Dorsolateral prefrontal cortex (tissue), 120 donors: ENCODE measurements at regions of chr5 and their contacts with region 1.

Region 1: GRCh38 chr5:146475190-146475801 is 28.2 kb downstream of the TCERG1 start:
- DNase-seq: no peak
- H3K4me3 ChIP-seq: no peak overlapping the region
- H3K27ac ChIP-seq: no peak overlapping the region
- H3K27me3 ChIP-seq: no peaks in the 10 kb centered on the region
- CTCF ChIP-seq: peak in 8 of 56 donors; percentile 8 to 34 (median 16)

Region 2: GRCh38 chr5:146529984-146530383 is 54.7 kb after region 1 on chr5:
- intact Hi-C with region 1: loop called in 1 of 2 experiments (anchors 10 kb)
- DNase-seq: no peak
- H3K4me3 ChIP-seq: no peak overlapping the region
- H3K27ac ChIP-seq: no peak overlapping the region
- H3K27me3 ChIP-seq: peaks cover 0 to 4% (median 0%) of the 10 kb centered on the region in 45 donors
- CTCF ChIP-seq: no peak